ENCODE measurements at regions of chr1 and their contacts with region 1.

Region 1: DNA sequence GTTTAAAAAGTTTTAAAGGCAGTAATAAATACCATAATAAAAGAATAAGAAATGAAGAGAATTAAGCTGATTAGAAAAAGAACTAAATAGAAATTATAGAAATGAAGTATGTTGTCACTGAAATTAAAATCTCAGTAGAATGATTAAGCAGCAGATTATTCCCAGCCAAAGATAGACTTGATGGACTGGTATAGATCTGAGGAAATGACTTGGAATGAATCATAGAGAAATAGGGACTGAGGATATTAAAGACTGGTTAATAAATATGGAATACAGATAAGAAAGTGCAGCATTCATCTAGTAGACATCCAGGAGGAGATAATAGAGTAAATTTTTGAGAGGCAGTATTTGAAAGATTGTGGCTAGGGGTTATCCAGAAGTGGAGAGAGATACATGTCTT is 28.7 kb downstream of the MARK1 start:
- DNase-seq: no peak
- ATAC-seq: no peak
- H3K4me3 ChIP-seq: no peak overlapping the region
- H3K27ac ChIP-seq: no peak overlapping the region
- H3K4me1 ChIP-seq: peaks cover 0 to 20% (median 0%) of the 10 kb centered on the region in 12 donors
- H3K27me3 ChIP-seq: no peaks in the 10 kb centered on the region
- CTCF ChIP-seq: no peak
- POLR2A ChIP-seq: no peak

Region 2: DNA sequence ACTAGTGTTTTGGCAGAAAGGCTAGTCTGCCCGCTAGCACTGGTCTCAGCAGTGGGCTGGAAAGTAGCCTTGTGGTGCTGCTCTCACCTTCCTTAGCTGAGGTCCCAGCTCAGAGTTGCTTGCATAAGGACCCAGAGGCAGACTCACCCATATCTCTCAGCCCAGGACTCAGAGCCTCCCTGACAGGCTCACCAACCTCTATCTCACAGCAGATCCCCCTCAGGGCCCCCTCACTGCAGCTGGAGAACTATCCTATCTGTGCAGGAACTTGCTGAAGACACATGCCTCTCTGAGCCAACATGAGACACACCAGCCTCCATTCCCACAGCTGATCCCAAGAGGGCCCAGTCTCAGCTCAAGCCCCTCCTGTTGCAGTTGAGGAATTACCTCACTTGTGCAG is 380.1 kb before region 1 on chr1:
- intact Hi-C with region 1: loop called in 1 of 10 experiments (anchors 5 kb)
- DNase-seq: no peak
- ATAC-seq: peak in 1 of 4 donors; percentile 27
- H3K4me3 ChIP-seq: no peak overlapping the region
- H3K27ac ChIP-seq: no peak overlapping the region
- H3K4me1 ChIP-seq: no peaks in the 10 kb centered on the region
- H3K27me3 ChIP-seq: no peaks in the 10 kb centered on the region
- CTCF ChIP-seq: no peak
- POLR2A ChIP-seq: no peak

Region 3: DNA sequence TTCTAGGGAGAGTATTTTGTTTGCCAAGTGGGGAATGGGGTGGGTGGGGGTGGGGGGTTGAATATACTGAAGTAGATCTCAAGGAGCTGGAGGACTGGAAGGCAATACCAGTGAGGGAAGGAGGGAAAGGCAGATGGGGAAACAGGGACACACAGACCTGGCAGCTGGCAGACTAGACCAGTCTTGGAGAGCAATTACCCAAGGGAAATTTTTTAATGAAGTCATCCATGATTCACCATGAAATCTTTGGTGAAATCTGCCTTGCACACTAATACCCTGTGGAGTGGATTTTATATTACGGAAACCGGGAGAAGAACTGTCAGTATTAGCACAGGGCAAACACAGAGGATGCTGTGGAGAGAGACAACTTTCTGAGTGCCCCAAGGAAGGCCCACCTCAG is 58.5 kb before region 1 on chr1:
- intact Hi-C with region 1: no loop called
- DNase-seq: no peak
- ATAC-seq: peak in 1 of 4 donors; percentile 16
- H3K4me3 ChIP-seq: no peak overlapping the region
- H3K27ac ChIP-seq: no peak overlapping the region
- H3K4me1 ChIP-seq: no peaks in the 10 kb centered on the region
- H3K27me3 ChIP-seq: peaks cover 0 to 6% (median 0%) of the 10 kb centered on the region in 9 donors
- CTCF ChIP-seq: no peak
- POLR2A ChIP-seq: no peak